Activated naive CD4-positive, alpha-beta T cell treated with anti-CD3 and anti-CD28 coated beads for 36 hours (primary cell): ENCODE measurements at regions of chr17 and their contacts with region 1.

Region 1: DNA sequence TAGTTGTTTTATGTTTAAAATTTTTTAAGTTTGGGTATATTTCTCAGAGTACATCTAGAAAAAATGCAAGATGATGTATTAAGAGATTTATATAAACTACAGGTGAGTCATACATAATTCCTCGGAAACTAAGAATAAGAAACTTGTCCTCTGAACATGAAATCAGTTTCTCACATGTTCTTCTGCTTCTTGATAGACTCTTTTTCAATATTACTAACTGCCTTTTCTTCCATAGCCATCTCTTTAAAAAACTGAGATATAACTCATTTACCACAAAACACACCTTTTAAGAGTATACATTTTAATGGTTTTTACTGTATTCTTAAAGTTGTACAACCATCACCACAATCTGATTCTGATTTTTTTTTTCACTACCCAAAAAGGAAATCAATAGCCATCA is 238.4 kb upstream of the AXIN2 start:
- DNase-seq: no peak
- H3K4me3 Mint-ChIP-seq: no peak overlapping the region
- H3K27ac Mint-ChIP-seq: peak overlapping the region; percentile 66
- H3K4me1 Mint-ChIP-seq: peaks cover 26% of the 10 kb centered on the region
- H3K27me3 Mint-ChIP-seq: no peaks in the 10 kb centered on the region

Region 2: GRCh38 chr17:65609749-65610148 is 190.1 kb before region 1 on chr17:
- CTCF ChIA-PET with region 1: no interaction called
- intact Hi-C with region 1: no loop called
- DNase-seq: no peak
- H3K4me3 Mint-ChIP-seq: no peak overlapping the region
- H3K27ac Mint-ChIP-seq: no peak overlapping the region
- H3K4me1 Mint-ChIP-seq: no peaks in the 10 kb centered on the region
- H3K27me3 Mint-ChIP-seq: no peaks in the 10 kb centered on the region

Region 3: DNA sequence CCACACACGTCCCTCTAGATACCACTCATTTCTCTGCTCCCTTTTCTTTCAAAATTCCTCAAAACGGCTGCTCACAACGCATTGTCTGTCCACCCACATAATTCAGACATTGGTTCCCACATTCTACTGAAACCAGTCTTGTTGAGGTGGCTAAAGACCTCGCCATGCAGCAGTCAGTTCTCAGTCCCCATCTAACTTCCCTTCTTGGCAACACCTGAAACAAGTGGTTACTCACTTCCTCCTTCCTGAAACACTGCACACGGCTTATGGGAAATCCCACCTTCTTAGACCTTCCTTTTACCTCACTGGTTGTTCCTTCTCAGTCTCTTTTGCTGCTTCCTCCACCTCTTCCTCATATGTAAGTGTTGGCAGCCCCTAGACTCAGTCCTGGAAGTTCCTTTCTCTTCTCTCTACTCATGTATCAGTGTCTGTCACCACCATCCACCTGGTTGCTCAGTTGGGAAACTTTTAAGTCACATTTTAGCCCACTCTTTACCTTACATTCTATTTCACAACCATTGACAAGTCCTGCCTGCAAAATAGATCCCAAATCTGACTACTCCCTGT is 115.0 kb after region 1 on chr17:
- CTCF ChIA-PET with region 1: no interaction called
- intact Hi-C with region 1: loop called (anchors 2 kb)
- DNase-seq: peak; percentile 72
- H3K4me3 Mint-ChIP-seq: no peak overlapping the region
- H3K27ac Mint-ChIP-seq: peak overlapping the region; percentile 71
- H3K4me1 Mint-ChIP-seq: peaks cover 17% of the 10 kb centered on the region
- H3K27me3 Mint-ChIP-seq: no peaks in the 10 kb centered on the region